Activated naive CD4-positive, alpha-beta T cell treated with anti-CD3 and anti-CD28 coated beads, Interleukin-2, amount 10 ng/mL, durations not matched to agents 7 days and 5 days (primary cell): ENCODE measurements at regions of chr10 and their contacts with region 1.

Region 1: GRCh38 chr10:80612261-80612660 is 74.6 kb downstream of the SH2D4B start:
- DNase-seq: no peak
- H3K4me3 Mint-ChIP-seq: no peak overlapping the region
- H3K27ac Mint-ChIP-seq: no peak overlapping the region
- H3K4me1 Mint-ChIP-seq: no peaks in the 10 kb centered on the region
- H3K27me3 Mint-ChIP-seq: peaks cover 16% of the 10 kb centered on the region

Region 2: GRCh38 chr10:80599424-80599847 is 12.8 kb before region 1 on chr10:
- CTCF ChIA-PET with region 1: interaction called, 10 read pairs
- DNase-seq: peak; percentile 59
- H3K4me3 Mint-ChIP-seq: no peak overlapping the region
- H3K27ac Mint-ChIP-seq: no peak overlapping the region
- H3K4me1 Mint-ChIP-seq: no peaks in the 10 kb centered on the region
- H3K27me3 Mint-ChIP-seq: peaks cover 7% of the 10 kb centered on the region

Region 3: DNA sequence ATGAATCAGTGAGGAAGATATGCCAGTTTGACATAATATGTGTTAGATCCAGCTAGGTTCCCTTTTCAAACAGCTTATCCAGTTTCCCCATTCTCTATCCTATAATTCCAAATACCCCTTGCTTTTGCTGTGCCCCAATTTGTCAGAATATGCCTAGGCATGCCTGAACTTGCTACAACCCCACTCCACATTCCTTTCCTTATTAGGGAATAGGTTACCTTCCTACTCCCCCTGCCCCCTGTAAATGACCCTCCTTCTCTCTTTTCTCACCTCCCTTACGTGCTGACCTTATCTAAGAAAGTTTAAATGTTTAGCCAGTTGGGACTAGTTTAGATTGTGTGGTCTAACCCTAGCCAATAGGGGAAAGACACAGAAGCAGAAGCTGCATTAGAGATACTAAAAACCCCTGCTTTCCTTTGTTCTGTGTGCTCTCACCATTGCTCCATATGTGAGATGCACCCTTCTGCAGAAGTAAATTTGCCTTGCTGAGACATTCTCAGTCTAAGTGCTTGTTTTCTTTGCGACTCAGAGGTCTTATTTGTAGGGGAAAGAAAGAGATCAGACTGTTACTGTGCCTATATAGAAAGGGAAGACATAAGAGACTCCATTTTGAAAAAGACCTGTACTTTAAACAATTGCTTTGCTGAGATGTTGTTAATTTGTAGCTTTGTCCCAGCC is 193.2 kb after region 1 on chr10:
- CTCF ChIA-PET with region 1: no interaction called
- DNase-seq: no peak
- H3K4me3 Mint-ChIP-seq: no peak overlapping the region
- H3K27ac Mint-ChIP-seq: no peak overlapping the region
- H3K4me1 Mint-ChIP-seq: no peaks in the 10 kb centered on the region
- H3K27me3 Mint-ChIP-seq: no peaks in the 10 kb centered on the region